Testis (tissue), 5 donors: ENCODE measurements at regions of chr2 and their contacts with region 1.

Region 1: GRCh38 chr2:231198291-231199173 is at the start of gene ARMC9:
- DNase-seq: peak; percentile 86
- H3K4me3 ChIP-seq: peak within 1 kb of the TSS; percentile 86 to 87
- H3K27ac ChIP-seq: peak within 1 kb of the TSS; percentile 32 to 52
- H3K4me1 ChIP-seq: peaks cover 5% of the 10 kb centered on the region
- H3K27me3 ChIP-seq: no peaks in the 10 kb centered on the region
- CTCF ChIP-seq: no peak
- POLR2A ChIP-seq: no peak
- total RNA-seq, gene ARMC9: 47.5 to 49.7 TPM

Region 2: GRCh38 chr2:230007931-230008707 is 1190.4 kb before region 1 on chr2:
- intact Hi-C with region 1: no loop called
- DNase-seq: peak; percentile 89
- H3K4me3 ChIP-seq: no peak overlapping the region
- H3K27ac ChIP-seq: no peak overlapping the region
- H3K4me1 ChIP-seq: peaks cover 6% of the 10 kb centered on the region
- H3K27me3 ChIP-seq: no peaks in the 10 kb centered on the region
- CTCF ChIP-seq: peak; percentile 56 to 91 (median 91)
- POLR2A ChIP-seq: no peak

Region 3: DNA sequence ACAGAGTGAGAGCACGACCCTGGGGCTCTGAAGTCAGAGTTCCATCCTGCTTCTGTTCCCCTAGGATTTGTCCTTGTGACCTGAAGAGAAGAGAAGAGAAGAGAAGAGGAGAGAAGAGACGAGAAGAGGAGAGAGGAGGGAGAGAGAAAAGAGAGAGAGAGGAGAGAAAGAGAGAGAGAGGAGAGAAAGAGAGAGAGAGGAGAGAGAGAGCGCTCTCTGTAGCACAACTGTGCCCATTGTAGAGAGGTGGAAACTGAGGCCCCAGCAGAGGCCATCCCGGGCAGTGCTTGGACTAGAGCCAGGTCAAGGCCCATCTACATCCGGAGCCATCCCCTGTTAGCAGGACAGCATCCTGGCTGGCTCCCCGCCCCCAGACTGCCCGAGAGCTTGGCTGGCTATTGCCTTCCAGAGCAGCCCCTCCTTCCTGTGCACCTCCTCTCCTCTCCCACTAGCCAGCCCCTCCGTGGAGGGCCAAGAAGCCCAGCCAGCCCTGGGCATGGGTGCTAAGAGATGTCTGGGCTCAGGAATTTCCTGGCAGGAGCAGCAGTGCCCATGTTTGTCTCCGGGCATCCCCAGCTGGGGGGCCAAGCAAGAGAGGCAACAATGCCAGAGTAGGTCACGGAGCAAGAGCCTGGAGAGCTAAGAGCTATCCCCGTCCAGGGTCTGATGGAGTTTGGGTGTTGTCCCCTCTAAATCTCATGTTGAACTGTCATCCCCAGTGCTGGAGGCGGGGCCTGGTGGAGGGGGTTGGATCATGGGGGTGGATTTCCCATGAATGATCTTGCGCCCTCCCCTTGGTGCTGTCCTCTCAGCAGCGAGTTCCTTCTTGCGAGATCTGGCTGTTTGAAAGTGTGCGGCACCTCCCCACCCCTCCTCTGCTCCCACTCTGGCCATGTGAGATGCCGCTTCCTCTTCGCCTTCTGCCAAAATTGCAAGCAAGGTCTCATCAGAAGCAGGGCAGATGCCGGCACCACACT is 255.3 kb before region 1 on chr2:
- intact Hi-C with region 1: no loop called
- DNase-seq: no peak
- H3K4me3 ChIP-seq: no peak overlapping the region
- H3K27ac ChIP-seq: no peak overlapping the region
- H3K4me1 ChIP-seq: no peaks in the 10 kb centered on the region
- H3K27me3 ChIP-seq: no peaks in the 10 kb centered on the region
- CTCF ChIP-seq: no peak
- POLR2A ChIP-seq: no peak

Region 4: GRCh38 chr2:231110551-231110950 is 88.0 kb before region 1 on chr2:
- intact Hi-C with region 1: loop called (anchors 10 kb)
- DNase-seq: no peak
- H3K4me3 ChIP-seq: no peak overlapping the region
- H3K27ac ChIP-seq: no peak overlapping the region
- H3K4me1 ChIP-seq: peaks cover 9% of the 10 kb centered on the region
- H3K27me3 ChIP-seq: no peaks in the 10 kb centered on the region
- CTCF ChIP-seq: no peak
- POLR2A ChIP-seq: no peak

Region 5: GRCh38 chr2:231245253-231246094 is 46.9 kb after region 1 on chr2:
- intact Hi-C with region 1: no loop called
- DNase-seq: no peak
- H3K4me3 ChIP-seq: no peak overlapping the region
- H3K27ac ChIP-seq: no peak overlapping the region
- H3K4me1 ChIP-seq: no peaks in the 10 kb centered on the region
- H3K27me3 ChIP-seq: no peaks in the 10 kb centered on the region
- CTCF ChIP-seq: no peak
- POLR2A ChIP-seq: no peak

Region 6: DNA sequence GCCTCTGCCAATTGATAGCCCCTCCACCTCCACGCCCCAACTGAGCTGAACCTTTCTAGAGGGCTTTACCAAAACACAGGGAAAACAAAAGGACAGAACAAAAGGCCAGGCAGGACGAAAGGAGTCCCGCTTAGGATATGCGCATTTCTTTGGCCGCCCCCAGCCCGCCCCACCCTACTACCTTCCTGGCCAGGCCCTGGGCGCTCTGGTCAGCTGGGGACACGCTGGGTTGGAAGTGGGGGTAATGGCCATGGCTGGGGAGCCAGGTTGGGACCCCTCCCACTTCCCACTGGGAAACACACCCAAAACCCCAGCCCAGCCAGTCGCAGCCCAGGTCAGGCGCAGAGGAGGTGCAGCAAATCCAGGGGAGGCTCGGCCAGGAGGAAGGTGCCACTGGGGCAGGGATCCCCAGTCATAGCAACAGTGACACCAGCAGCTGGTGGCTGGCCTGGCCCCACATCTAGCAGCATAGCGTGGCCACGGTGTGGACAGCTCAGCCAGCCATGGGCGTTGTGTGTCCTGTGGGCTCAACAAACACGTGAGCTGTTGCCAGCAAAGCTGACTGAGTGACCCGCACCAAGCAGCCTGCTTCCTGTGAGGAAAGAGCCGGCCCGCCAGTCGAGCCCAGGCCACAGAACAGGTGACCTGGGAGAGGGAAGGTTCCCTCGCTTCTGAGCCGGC is 172.4 kb after region 1 on chr2:
- intact Hi-C with region 1: no loop called
- DNase-seq: no peak
- H3K4me3 ChIP-seq: no peak overlapping the region
- H3K27ac ChIP-seq: no peak overlapping the region
- H3K4me1 ChIP-seq: no peaks in the 10 kb centered on the region
- H3K27me3 ChIP-seq: no peaks in the 10 kb centered on the region
- CTCF ChIP-seq: no peak
- POLR2A ChIP-seq: no peak